Activated CD8-positive, alpha-beta T cell treated with anti-CD3 and anti-CD28 coated beads for 36 hours (primary cell): ENCODE measurements at regions of chr3 and their contacts with region 1.

Region 1: GRCh38 chr3:71305231-71306206 is 278.0 kb downstream of the FOXP1 start:
- DNase-seq: peak; percentile 46
- ATAC-seq: peak; percentile 3
- H3K4me3 Mint-ChIP-seq: peak overlapping the region; percentile 89
- H3K27ac Mint-ChIP-seq: peak overlapping the region; percentile 97
- H3K4me1 Mint-ChIP-seq: peaks cover 55% of the 10 kb centered on the region
- H3K27me3 Mint-ChIP-seq: no peaks in the 10 kb centered on the region
- CTCF ChIP-seq: no peak

Region 2: DNA sequence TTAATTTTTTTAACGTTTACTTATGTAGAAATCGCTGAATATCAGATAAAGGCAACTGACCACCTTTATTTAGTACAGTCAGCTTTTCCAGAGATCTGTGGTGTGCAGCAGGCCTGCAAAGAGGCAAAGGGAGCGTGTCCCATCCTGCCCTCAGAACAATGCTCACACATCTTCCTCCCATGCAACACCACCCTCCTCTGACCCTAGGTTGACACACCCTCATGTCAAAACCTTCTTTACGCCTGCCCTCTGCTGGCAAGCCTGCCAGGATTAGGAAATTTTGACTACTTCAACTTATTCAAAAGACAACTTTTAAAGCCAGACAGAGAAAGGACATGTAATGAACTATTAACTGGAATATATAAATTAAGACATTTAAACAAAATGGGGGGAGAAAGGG is 235.7 kb before region 1 on chr3:
- CTCF ChIA-PET with region 1: interaction called, 3 read pairs
- POLR2A ChIA-PET with region 1: interaction called, 93 read pairs
- intact Hi-C with region 1: loop called (anchors 5 kb)
- DNase-seq: peak; percentile 88
- ATAC-seq: peak; percentile 43
- H3K4me3 Mint-ChIP-seq: peak overlapping the region; percentile 9
- H3K27ac Mint-ChIP-seq: peak overlapping the region; percentile 79
- H3K4me1 Mint-ChIP-seq: peaks cover 86% of the 10 kb centered on the region
- H3K27me3 Mint-ChIP-seq: no peaks in the 10 kb centered on the region
- CTCF ChIP-seq: peak; percentile 51

Region 3: GRCh38 chr3:71226565-71227269 is 78.8 kb before region 1 on chr3:
- CTCF ChIA-PET with region 1: interaction called, 4 read pairs
- POLR2A ChIA-PET with region 1: interaction called, 11 read pairs
- intact Hi-C with region 1: loop called (anchors 1 kb)
- DNase-seq: peak; percentile 95
- ATAC-seq: peak; percentile 88
- H3K4me3 Mint-ChIP-seq: peak overlapping the region; percentile 76
- H3K27ac Mint-ChIP-seq: peak overlapping the region; percentile 96
- H3K4me1 Mint-ChIP-seq: peaks cover 83% of the 10 kb centered on the region
- H3K27me3 Mint-ChIP-seq: no peaks in the 10 kb centered on the region
- CTCF ChIP-seq: no peak

Region 4: GRCh38 chr3:71380096-71380495 is 74.6 kb after region 1 on chr3:
- CTCF ChIA-PET with region 1: no interaction called
- POLR2A ChIA-PET with region 1: interaction called, 43 read pairs
- intact Hi-C with region 1: loop called (anchors 5 kb)
- DNase-seq: no peak
- ATAC-seq: no peak
- H3K4me3 Mint-ChIP-seq: no peak overlapping the region
- H3K27ac Mint-ChIP-seq: peak overlapping the region; percentile 91
- H3K4me1 Mint-ChIP-seq: peaks cover 88% of the 10 kb centered on the region
- H3K27me3 Mint-ChIP-seq: no peaks in the 10 kb centered on the region
- CTCF ChIP-seq: peak; percentile 43

Region 5: DNA sequence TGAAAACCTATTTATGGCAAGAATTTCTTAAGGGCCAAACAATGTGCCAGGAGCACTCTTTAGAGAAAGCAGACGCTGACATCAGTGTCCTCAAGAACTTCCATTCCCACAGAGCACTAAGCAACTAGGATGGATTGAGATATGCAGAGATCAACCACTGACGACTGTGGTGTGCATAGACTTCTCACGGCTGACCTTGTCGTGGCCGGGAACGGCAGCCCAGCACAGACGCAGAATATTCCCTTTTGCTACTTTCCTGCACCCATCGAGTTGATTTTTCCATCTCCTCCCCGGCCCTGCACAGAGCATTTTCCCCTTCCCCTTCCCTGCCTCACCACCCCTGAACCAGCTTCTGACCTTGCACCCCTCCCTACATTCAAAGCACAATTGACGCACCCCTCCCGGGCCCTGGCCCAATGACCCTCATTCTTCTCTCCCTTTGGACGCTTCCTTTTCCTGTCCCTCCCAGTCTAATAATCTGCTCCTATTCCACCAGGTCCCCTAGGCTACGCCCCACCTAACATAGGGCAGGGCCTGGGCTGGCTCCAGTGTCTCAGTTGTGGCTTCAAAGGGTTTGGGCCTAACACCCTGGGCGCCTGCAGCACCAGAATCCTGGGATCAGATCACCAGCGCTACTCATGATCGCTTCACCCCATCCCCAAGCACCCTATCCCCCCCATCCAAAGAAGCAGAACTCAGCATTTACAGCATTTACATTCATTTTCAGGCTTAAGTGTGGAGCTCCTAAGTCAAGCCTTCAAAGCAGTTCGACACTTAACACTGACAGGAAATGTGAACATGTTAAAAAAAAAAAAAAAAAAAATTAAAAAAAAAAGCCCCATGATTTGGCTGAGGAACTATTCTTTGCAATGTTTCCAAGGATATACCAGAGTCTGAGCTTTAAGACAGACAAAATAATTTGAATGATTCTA is 126.8 kb after region 1 on chr3:
- CTCF ChIA-PET with region 1: no interaction called
- POLR2A ChIA-PET with region 1: no interaction called
- intact Hi-C with region 1: no loop called
- DNase-seq: no peak
- ATAC-seq: peak; percentile 38
- H3K4me3 Mint-ChIP-seq: peak overlapping the region; percentile 49
- H3K27ac Mint-ChIP-seq: peak overlapping the region; percentile 97
- H3K4me1 Mint-ChIP-seq: peaks cover 89% of the 10 kb centered on the region
- H3K27me3 Mint-ChIP-seq: no peaks in the 10 kb centered on the region
- CTCF ChIP-seq: no peak

Region 6: GRCh38 chr3:71456156-71456555 is 150.6 kb after region 1 on chr3:
- CTCF ChIA-PET with region 1: interaction called, 5 read pairs
- POLR2A ChIA-PET with region 1: interaction called, 12 read pairs
- intact Hi-C with region 1: no loop called
- DNase-seq: peak; percentile 30
- ATAC-seq: no peak
- H3K4me3 Mint-ChIP-seq: peak overlapping the region; percentile 68
- H3K27ac Mint-ChIP-seq: peak overlapping the region; percentile 93
- H3K4me1 Mint-ChIP-seq: peaks cover 88% of the 10 kb centered on the region
- H3K27me3 Mint-ChIP-seq: no peaks in the 10 kb centered on the region
- CTCF ChIP-seq: peak; percentile 26